Mammary epithelial cell (primary cell): ENCODE measurements at regions of chr20 and their contacts with region 1.

Region 1: DNA sequence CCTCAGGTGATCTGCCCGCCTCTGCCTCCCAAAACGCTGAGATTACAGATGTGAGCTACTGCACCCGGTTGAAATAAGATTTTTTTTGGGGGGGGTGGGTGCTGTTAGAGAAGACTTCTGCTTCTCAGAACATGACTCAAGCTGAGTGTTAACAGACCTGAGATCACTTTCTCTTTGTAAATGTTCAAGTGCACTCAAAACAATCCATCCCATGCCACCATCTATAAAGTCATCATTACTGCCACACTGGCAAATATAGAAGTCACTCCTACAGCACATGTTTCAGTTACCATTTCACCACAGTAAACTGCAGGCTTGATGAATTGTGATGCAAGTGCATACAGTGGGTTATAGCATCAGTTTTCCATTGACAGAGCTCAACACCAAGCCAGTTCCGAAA is 9.0 kb downstream of the VPS16 start:
- DNase-seq: no peak
- H3K4me3 ChIP-seq: no peak overlapping the region
- H3K27ac ChIP-seq: no peak overlapping the region
- H3K4me1 ChIP-seq: no peaks in the 10 kb centered on the region
- H3K27me3 ChIP-seq: no peaks in the 10 kb centered on the region
- CTCF ChIP-seq: no peak

Region 2: DNA sequence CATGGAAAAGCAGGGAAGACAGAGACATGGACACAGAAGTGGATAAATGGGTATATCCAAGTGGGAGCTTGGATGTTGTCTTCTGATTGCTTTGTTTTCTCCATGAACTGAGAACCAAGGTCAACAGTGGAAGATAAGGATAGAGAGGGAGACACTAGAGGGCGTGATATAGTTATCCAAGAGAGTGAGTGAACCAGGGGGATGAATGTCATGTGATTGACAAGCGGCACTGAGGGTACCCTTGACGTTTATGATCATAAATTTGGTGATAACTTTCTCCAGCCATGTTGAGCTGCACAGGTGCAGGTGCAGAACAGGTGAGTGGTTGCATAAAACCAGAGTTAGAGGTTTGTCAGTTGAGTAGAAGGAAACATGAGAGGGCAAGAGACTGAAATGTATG is 136.2 kb before region 1 on chr20:
- CTCF ChIA-PET with region 1: no interaction called
- dilution Hi-C with region 1: no loop called
- in situ Hi-C with region 1: no loop called
- intact Hi-C with region 1: loop called (anchors 1 kb)
- DNase-seq: no peak
- H3K4me3 ChIP-seq: no peak overlapping the region
- H3K27ac ChIP-seq: no peak overlapping the region
- H3K4me1 ChIP-seq: no peaks in the 10 kb centered on the region
- H3K27me3 ChIP-seq: peaks cover 11% of the 10 kb centered on the region
- CTCF ChIP-seq: peak; percentile 7 to 49

Region 3: DNA sequence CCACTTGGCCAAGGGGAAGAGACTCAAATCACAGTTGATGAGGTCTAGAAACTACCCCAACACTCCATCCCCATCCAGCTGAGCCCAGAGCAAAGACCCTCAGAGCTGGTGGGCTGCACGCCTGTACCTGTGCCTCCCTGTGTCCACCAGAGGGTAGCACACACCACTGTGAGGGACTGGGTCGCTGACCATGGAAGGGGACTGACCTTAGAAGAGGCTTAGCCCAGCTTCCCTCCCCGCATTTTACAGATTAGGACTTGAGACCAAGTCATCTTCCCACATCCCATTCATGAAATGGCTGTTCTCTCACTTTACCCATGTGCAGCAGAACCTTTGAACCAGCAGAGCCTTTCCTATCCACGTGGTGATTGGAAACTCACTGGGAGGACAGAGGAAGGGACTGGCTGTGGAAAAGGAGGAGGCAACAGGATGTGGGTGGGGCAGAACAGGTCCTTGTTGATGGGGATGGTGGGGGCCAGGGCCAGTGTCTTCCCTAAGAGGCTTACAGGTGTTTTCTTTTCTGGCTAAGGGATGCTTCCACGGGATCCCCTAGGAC is 93.4 kb before region 1 on chr20:
- CTCF ChIA-PET with region 1: interaction called, 5 read pairs
- dilution Hi-C with region 1: no loop called
- in situ Hi-C with region 1: no loop called
- intact Hi-C with region 1: loop called (anchors 1 kb)
- DNase-seq: no peak
- H3K4me3 ChIP-seq: no peak overlapping the region
- H3K27ac ChIP-seq: no peak overlapping the region
- H3K4me1 ChIP-seq: peaks cover 10% of the 10 kb centered on the region
- H3K27me3 ChIP-seq: peaks cover 20% of the 10 kb centered on the region
- CTCF ChIP-seq: peak; percentile 42 to 64